Heart left ventricle (tissue), 16 donors: ENCODE measurements at regions of chr11 and their contacts with region 1.

Region 1: DNA sequence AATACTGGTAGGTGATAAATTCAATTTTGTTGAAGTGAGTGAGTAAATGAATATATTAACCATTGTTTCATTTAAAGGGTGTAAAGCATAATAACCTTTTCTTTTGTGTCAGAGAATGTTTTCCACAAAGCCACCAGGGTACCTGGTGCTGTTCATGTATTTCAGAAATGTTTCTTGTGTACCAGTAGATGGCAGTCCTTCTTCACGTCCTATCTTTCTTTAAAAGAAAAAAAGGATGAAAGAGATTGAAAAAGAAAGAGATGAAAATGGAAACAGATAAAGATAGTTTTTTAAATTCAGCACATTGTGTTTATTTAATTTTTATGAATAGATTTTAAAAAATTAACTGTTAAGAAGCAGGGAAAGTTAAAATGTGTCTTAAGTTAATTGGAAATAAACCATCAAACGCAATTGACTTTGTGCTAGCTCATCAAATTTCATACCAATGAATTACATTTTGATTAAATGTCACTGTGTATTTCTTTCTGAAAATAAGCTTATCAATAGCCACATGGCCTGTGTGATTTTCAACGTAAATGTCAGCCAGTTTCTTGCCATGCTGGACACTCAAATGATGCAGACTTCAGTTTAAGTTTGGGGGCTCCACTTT is 65.5 kb upstream of the CHORDC1 start:
- DNase-seq: no peak
- ATAC-seq: no peak
- H3K4me3 ChIP-seq: no peak overlapping the region
- H3K27ac ChIP-seq: no peak overlapping the region
- H3K4me1 ChIP-seq: no peaks in the 10 kb centered on the region
- H3K27me3 ChIP-seq: no peaks in the 10 kb centered on the region
- CTCF ChIP-seq: peak; percentile 36 to 69 (median 58)
- POLR2A ChIP-seq: no peak

Region 2: GRCh38 chr11:90243534-90243933 is 44.8 kb before region 1 on chr11:
- intact Hi-C with region 1: no loop called
- DNase-seq: no peak
- ATAC-seq: no peak
- H3K4me3 ChIP-seq: no peak overlapping the region
- H3K27ac ChIP-seq: no peak overlapping the region
- H3K4me1 ChIP-seq: no peaks in the 10 kb centered on the region
- H3K27me3 ChIP-seq: no peaks in the 10 kb centered on the region
- CTCF ChIP-seq: no peak
- POLR2A ChIP-seq: no peak

Region 3: GRCh38 chr11:90434858-90435257 is 146.5 kb after region 1 on chr11:
- intact Hi-C with region 1: loop called in 1 of 10 experiments (anchors 10 kb)
- DNase-seq: no peak
- ATAC-seq: no peak
- H3K4me3 ChIP-seq: no peak overlapping the region
- H3K27ac ChIP-seq: no peak overlapping the region
- H3K4me1 ChIP-seq: no peaks in the 10 kb centered on the region
- H3K27me3 ChIP-seq: no peaks in the 10 kb centered on the region
- CTCF ChIP-seq: peak in 9 of 12 donors; percentile 11 to 46 (median 37)
- POLR2A ChIP-seq: no peak

Region 4: GRCh38 chr11:90453525-90453924 is 165.2 kb after region 1 on chr11:
- intact Hi-C with region 1: loop called in 6 of 10 experiments (anchors 2 to 10 kb)
- DNase-seq: no peak
- ATAC-seq: no peak
- H3K4me3 ChIP-seq: no peak overlapping the region
- H3K27ac ChIP-seq: no peak overlapping the region
- H3K4me1 ChIP-seq: peaks cover 0 to 3% (median 0%) of the 10 kb centered on the region in 12 donors
- H3K27me3 ChIP-seq: no peaks in the 10 kb centered on the region
- CTCF ChIP-seq: no peak
- POLR2A ChIP-seq: no peak

Region 5: DNA sequence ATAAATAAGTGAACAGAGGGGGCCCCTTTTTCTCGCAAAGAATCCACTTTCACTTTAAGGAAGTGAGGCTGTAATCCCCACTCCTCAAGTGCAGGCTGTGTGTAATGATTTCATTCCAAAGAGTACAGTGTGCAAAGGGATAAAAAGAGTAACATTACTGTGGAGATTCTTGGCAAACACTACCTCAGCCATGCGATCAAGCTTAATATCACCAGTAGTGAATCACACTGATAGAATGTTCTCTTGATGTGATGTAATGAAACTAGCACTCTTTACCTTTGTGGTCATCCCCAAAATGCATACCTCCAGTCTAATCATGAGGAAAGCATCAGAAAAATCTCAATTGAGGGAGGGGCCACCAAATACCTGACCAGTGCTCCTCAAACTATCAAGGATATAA is 180.6 kb after region 1 on chr11:
- intact Hi-C with region 1: loop called in 4 of 10 experiments (anchors 5 kb)
- DNase-seq: no peak
- ATAC-seq: peak; percentile 57 to 79 (median 67)
- H3K4me3 ChIP-seq: no peak overlapping the region
- H3K27ac ChIP-seq: no peak overlapping the region
- H3K4me1 ChIP-seq: no peaks in the 10 kb centered on the region
- H3K27me3 ChIP-seq: no peaks in the 10 kb centered on the region
- CTCF ChIP-seq: no peak
- POLR2A ChIP-seq: no peak